Sigmoid colon (tissue), 7 donors: ENCODE measurements at regions of chr14 and their contacts with region 1.

Region 1: GRCh38 chr14:105020815-105021655 is at the start of gene CDCA4:
- DNase-seq: peak; percentile 98
- H3K4me3 ChIP-seq: peak within 1 kb of the TSS; percentile 69 to 96 (median 86)
- H3K27ac ChIP-seq: peak within 1 kb of the TSS; percentile 82 to 88 (median 86)
- H3K4me1 ChIP-seq: peaks cover 0 to 37% (median 33%) of the 10 kb centered on the region in 4 donors
- H3K27me3 ChIP-seq: no peaks in the 10 kb centered on the region
- CTCF ChIP-seq: no peak
- EP300 ChIP-seq: peak in 1 of 4 donors; percentile 50
- POLR2A ChIP-seq: peak; percentile 80 to 84
- total RNA-seq, gene CDCA4: 5.0 to 7.6 (median 5.6) TPM

Region 2: GRCh38 chr14:104932676-104933631 is 88.1 kb before region 1 on chr14:
- intact Hi-C with region 1: loop called (anchors 2 kb)
- DNase-seq: peak; percentile 95
- H3K4me3 ChIP-seq: peak overlapping the region; percentile 50 to 72 (median 61)
- H3K27ac ChIP-seq: peak overlapping the region; percentile 65 to 83 (median 76)
- H3K4me1 ChIP-seq: peaks cover 0 to 23% (median 20%) of the 10 kb centered on the region in 4 donors
- H3K27me3 ChIP-seq: no peaks in the 10 kb centered on the region
- CTCF ChIP-seq: peak; percentile 43 to 83 (median 60)
- EP300 ChIP-seq: no peak
- POLR2A ChIP-seq: no peak

Region 3: GRCh38 chr14:104968153-104968527 is 52.9 kb before region 1 on chr14:
- intact Hi-C with region 1: loop called (anchors 1 kb)
- DNase-seq: peak; percentile 96
- H3K4me3 ChIP-seq: peak overlapping the region; percentile 49 to 64 (median 56)
- H3K27ac ChIP-seq: peak overlapping the region; percentile 90 to 97 (median 96)
- H3K4me1 ChIP-seq: peaks cover 0 to 76% (median 73%) of the 10 kb centered on the region in 4 donors
- H3K27me3 ChIP-seq: no peaks in the 10 kb centered on the region
- CTCF ChIP-seq: no peak
- EP300 ChIP-seq: no peak
- POLR2A ChIP-seq: peak; percentile 45 to 52

Region 4: DNA sequence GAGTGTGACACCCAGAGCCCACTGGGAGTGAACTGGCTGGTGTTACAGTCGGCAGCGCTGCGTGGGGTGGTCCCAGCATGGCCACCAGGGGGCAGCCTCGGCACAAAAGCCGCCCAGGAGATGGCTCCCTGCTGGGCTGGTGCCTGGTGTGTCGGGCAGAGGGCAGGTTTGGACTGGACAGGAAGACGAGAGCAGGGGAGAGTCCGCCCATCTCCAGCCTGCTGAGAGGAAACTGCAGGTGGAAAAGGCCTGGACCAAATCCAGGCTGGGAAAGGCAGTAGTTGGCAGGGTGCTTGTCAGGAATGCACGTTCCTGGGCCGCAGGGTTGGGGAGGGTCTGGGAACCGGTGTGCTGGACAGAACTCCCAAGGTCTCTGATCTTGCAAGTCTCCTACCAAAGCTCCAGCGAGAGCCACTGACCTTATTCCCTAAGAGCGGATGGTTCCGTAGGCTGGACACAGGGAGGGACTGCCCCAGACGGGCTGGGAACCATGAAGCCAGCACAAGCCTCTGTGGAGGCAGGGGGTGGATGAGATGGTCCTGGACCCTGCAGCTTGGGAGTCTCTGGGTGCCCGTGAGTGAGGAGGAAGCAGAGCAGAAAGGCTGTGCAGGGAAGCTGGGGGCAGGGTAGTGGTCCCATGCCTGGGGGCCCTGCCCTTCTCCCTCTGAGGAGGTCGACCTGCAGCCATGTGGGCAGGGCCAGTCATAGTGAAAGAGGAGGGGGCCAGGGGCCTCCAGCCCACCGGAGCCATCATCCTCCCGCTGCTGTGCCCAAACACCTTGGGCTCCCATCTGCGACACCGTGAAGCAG is 44.6 kb before region 1 on chr14:
- intact Hi-C with region 1: loop called (anchors 2 kb)
- DNase-seq: peak; percentile 92
- H3K4me3 ChIP-seq: peak overlapping the region in 1 of 4 donors; percentile 67
- H3K27ac ChIP-seq: peak overlapping the region; percentile 90 to 97 (median 96)
- H3K4me1 ChIP-seq: peaks cover 0 to 91% (median 86%) of the 10 kb centered on the region in 4 donors
- H3K27me3 ChIP-seq: no peaks in the 10 kb centered on the region
- CTCF ChIP-seq: peak; percentile 92 to 94 (median 92)
- EP300 ChIP-seq: no peak
- POLR2A ChIP-seq: no peak